CD4-positive, alpha-beta T cell (primary cell): ENCODE measurements at regions of chr2 and their contacts with region 1.

Region 1: GRCh38 chr2:203740780-203741281 is 34.4 kb downstream of the CD28 start:
- DNase-seq: peak in 7 of 14 experiments; percentile 31 to 89 (median 55)
- ATAC-seq: peak; percentile 86
- H3K4me3 ChIP-seq: peak overlapping the region; percentile 1
- H3K4me3 Mint-ChIP-seq: peak overlapping the region; percentile 70
- H3K27ac ChIP-seq: peak overlapping the region; percentile 66 to 79
- H3K27ac Mint-ChIP-seq: peak overlapping the region; percentile 87
- H3K4me1 ChIP-seq: peaks cover 76% of the 10 kb centered on the region
- H3K4me1 Mint-ChIP-seq: peaks cover 80% of the 10 kb centered on the region
- H3K27me3 ChIP-seq: no peaks in the 10 kb centered on the region
- H3K27me3 Mint-ChIP-seq: no peaks in the 10 kb centered on the region
- CTCF ChIP-seq: no peak

Region 2: DNA sequence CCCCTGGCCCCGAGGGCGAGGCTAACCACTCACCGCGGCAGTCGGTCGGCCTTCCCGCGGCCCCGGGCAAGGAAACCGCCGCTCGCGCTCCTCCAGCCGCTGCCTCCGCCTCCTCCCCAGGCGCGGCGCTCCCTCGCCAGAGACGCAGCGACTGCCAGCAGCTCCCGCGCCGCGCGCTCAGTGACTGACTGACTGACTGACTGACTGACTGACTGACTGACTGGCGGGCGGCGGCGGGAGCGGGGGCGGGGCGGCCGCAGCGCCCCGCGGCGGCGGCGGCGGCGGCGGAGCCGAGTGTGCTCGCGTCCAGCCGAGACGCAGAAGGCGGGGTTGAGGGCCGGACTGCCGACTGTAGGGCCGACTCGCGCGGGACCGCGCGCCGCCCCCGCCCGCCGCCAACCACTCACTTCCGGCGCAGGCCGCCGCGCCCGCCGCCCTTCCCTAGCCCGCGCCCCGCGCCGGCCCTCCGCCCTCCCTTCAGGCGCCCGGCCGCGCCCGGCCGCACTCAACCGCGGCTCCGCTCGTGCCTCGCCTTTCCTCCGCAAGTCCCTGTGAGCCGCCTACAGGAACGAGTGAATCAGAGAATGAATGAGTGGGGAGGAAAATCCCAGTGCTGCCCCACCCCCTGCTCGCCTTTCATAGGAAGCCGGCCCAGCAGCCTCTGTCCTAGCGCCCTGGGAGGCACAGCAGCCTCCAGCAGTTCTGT is 205.6 kb before region 1 on chr2 and contains the start of gene RAPH1:
- CTCF ChIA-PET with region 1: no interaction called
- POLR2A ChIA-PET with region 1: interaction called, 12 read pairs
- intact Hi-C with region 1: no loop called
- DNase-seq: peak; percentile 13 to 77 (median 49)
- ATAC-seq: peak; percentile 61
- H3K4me3 ChIP-seq: peak within 1 kb of the TSS; percentile 72
- H3K4me3 Mint-ChIP-seq: peak within 1 kb of the TSS; percentile 97
- H3K27ac ChIP-seq: no peak within 1 kb of the TSS
- H3K27ac Mint-ChIP-seq: peak within 1 kb of the TSS; percentile 80
- H3K4me1 ChIP-seq: peaks cover 20% of the 10 kb centered on the region
- H3K4me1 Mint-ChIP-seq: peaks cover 36% of the 10 kb centered on the region
- H3K27me3 ChIP-seq: peaks cover 0 to 4% of the 10 kb centered on the region in 2 experiments
- H3K27me3 Mint-ChIP-seq: peaks cover 5% of the 10 kb centered on the region
- CTCF ChIP-seq: no peak
- total RNA-seq, gene RAPH1: 4.3 to 5.8 TPM

Region 3: GRCh38 chr2:203718087-203718486 is 22.7 kb before region 1 on chr2:
- CTCF ChIA-PET with region 1: interaction called, 13 read pairs
- POLR2A ChIA-PET with region 1: interaction called, 621 read pairs
- intact Hi-C with region 1: loop called (anchors 1 to 2 kb)
- DNase-seq: peak in 10 of 14 experiments; percentile 29 to 83 (median 44)
- ATAC-seq: peak; percentile 45
- H3K4me3 ChIP-seq: peak overlapping the region; percentile 21
- H3K4me3 Mint-ChIP-seq: peak overlapping the region; percentile 75
- H3K27ac ChIP-seq: peak overlapping the region; percentile 70 to 72
- H3K27ac Mint-ChIP-seq: peak overlapping the region; percentile 92
- H3K4me1 ChIP-seq: peaks cover 81% of the 10 kb centered on the region
- H3K4me1 Mint-ChIP-seq: peaks cover 97% of the 10 kb centered on the region
- H3K27me3 ChIP-seq: no peaks in the 10 kb centered on the region
- H3K27me3 Mint-ChIP-seq: no peaks in the 10 kb centered on the region
- CTCF ChIP-seq: no peak

Region 4: GRCh38 chr2:203751685-203752271 is 10.9 kb after region 1 on chr2:
- CTCF ChIA-PET with region 1: interaction called, 8 read pairs
- POLR2A ChIA-PET with region 1: interaction called, 52 read pairs
- intact Hi-C with region 1: no loop called
- DNase-seq: no peak
- ATAC-seq: no peak
- H3K4me3 ChIP-seq: no peak overlapping the region
- H3K4me3 Mint-ChIP-seq: no peak overlapping the region
- H3K27ac ChIP-seq: no peak overlapping the region
- H3K27ac Mint-ChIP-seq: peak overlapping the region; percentile 46
- H3K4me1 ChIP-seq: peaks cover 34% of the 10 kb centered on the region
- H3K4me1 Mint-ChIP-seq: peaks cover 71% of the 10 kb centered on the region
- H3K27me3 ChIP-seq: no peaks in the 10 kb centered on the region
- H3K27me3 Mint-ChIP-seq: no peaks in the 10 kb centered on the region
- CTCF ChIP-seq: no peak

Region 5: GRCh38 chr2:203774760-203775159 is 33.9 kb after region 1 on chr2:
- CTCF ChIA-PET with region 1: no interaction called
- POLR2A ChIA-PET with region 1: interaction called, 20 read pairs
- intact Hi-C with region 1: no loop called
- DNase-seq: no peak
- ATAC-seq: no peak
- H3K4me3 ChIP-seq: no peak overlapping the region
- H3K4me3 Mint-ChIP-seq: no peak overlapping the region
- H3K27ac ChIP-seq: no peak overlapping the region
- H3K27ac Mint-ChIP-seq: no peak overlapping the region
- H3K4me1 ChIP-seq: no peaks in the 10 kb centered on the region
- H3K4me1 Mint-ChIP-seq: peaks cover 39% of the 10 kb centered on the region
- H3K27me3 ChIP-seq: no peaks in the 10 kb centered on the region
- H3K27me3 Mint-ChIP-seq: no peaks in the 10 kb centered on the region
- CTCF ChIP-seq: no peak

Region 6: GRCh38 chr2:203804070-203804469 is 63.2 kb after region 1 on chr2:
- CTCF ChIA-PET with region 1: no interaction called
- POLR2A ChIA-PET with region 1: interaction called, 18 read pairs
- intact Hi-C with region 1: loop called (anchors 5 kb)
- DNase-seq: peak in 5 of 14 experiments; percentile 11 to 70 (median 63)
- ATAC-seq: peak; percentile 75
- H3K4me3 ChIP-seq: peak overlapping the region; percentile 3
- H3K4me3 Mint-ChIP-seq: peak overlapping the region; percentile 30
- H3K27ac ChIP-seq: peak overlapping the region in 1 of 2 donors; percentile 46
- H3K27ac Mint-ChIP-seq: peak overlapping the region; percentile 57
- H3K4me1 ChIP-seq: peaks cover 27% of the 10 kb centered on the region
- H3K4me1 Mint-ChIP-seq: peaks cover 72% of the 10 kb centered on the region
- H3K27me3 ChIP-seq: no peaks in the 10 kb centered on the region
- H3K27me3 Mint-ChIP-seq: no peaks in the 10 kb centered on the region
- CTCF ChIP-seq: no peak